Endothelial cell of umbilical vein (primary cell): ENCODE measurements at regions of chr19 and their contacts with region 1.

Region 1: GRCh38 chr19:5904352-5905113 is at the start of gene VMAC:
- DNase-seq: peak; percentile 100
- H3K4me3 ChIP-seq: peak within 1 kb of the TSS; percentile 45 to 89 (median 86)
- H3K27ac ChIP-seq: peak within 1 kb of the TSS; percentile 90
- H3K4me1 ChIP-seq: peaks cover 8% of the 10 kb centered on the region
- H3K27me3 ChIP-seq: no peaks in the 10 kb centered on the region
- CTCF ChIP-seq: no peak
- POLR2A ChIP-seq: peak; percentile 56
- total RNA-seq, gene VMAC: 4.4 and 4.7 TPM in 2 replicates

Region 2: GRCh38 chr19:5719961-5720790 is 184.4 kb before region 1 on chr19 and contains the starts of genes CATSPERD and LONP1:
- CTCF ChIA-PET with region 1: interaction called, 3 read pairs
- POLR2A ChIA-PET with region 1: no interaction called
- dilution Hi-C with region 1: no loop called
- intact Hi-C with region 1: loop called (anchors 1 kb)
- DNase-seq: peak; percentile 99
- H3K4me3 ChIP-seq: peak within 1 kb of the TSS; percentile 52 to 79 (median 75)
- H3K27ac ChIP-seq: peak within 1 kb of the TSS; percentile 85
- H3K4me1 ChIP-seq: peaks cover 15% of the 10 kb centered on the region
- H3K27me3 ChIP-seq: no peaks in the 10 kb centered on the region
- CTCF ChIP-seq: peak; percentile 92 to 98
- POLR2A ChIP-seq: peak; percentile 75
- total RNA-seq, gene CATSPERD: not detected in 2 replicates
- total RNA-seq, gene LONP1: 95.1 and 95.7 TPM in 2 replicates

Region 3: GRCh38 chr19:5790573-5791520 is 113.7 kb before region 1 on chr19 and contains the start of gene DUS3L:
- CTCF ChIA-PET with region 1: no interaction called
- POLR2A ChIA-PET with region 1: no interaction called
- dilution Hi-C with region 1: no loop called
- intact Hi-C with region 1: loop called (anchors 1 kb)
- DNase-seq: peak; percentile 99
- H3K4me3 ChIP-seq: peak within 1 kb of the TSS; percentile 17 to 75 (median 55)
- H3K27ac ChIP-seq: peak within 1 kb of the TSS; percentile 82
- H3K4me1 ChIP-seq: peaks cover 5% of the 10 kb centered on the region
- H3K27me3 ChIP-seq: no peaks in the 10 kb centered on the region
- CTCF ChIP-seq: no peak
- POLR2A ChIP-seq: peak; percentile 68
- total RNA-seq, gene DUS3L: 38.9 and 40.8 TPM in 2 replicates

Region 4: DNA sequence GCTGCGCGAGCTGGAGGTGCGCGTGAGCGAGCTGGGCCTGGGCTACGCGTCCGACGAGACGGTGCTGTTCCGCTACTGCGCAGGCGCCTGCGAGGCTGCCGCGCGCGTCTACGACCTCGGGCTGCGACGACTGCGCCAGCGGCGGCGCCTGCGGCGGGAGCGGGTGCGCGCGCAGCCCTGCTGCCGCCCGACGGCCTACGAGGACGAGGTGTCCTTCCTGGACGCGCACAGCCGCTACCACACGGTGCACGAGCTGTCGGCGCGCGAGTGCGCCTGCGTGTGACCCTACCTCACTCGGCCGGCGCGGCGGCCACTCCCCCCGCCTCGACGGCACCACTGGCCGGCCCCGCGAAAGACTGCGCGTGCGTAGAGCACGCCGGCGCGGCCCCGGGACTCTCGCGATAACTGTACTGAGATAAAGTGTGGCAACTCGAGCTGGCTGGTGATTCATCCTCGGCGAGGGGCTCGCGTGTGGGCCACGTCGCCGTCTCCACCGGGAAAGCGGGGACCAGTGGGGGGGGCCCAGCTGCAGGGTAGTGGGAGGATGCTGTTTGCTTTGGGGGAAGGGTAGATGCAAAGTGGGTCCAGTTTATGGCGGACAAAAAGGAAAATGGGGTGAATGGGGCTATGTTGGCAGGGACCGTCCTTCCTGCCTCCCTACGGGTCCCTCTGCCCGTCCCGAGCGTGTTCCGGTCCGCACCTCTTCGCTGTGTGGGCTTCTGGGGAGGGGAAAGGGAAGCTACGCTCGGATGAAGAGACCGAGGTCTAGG is 76.5 kb before region 1 on chr19:
- CTCF ChIA-PET with region 1: no interaction called
- POLR2A ChIA-PET with region 1: interaction called, 14 read pairs
- dilution Hi-C with region 1: no loop called
- intact Hi-C with region 1: loop called (anchors 2 kb)
- DNase-seq: peak; percentile 97
- H3K4me3 ChIP-seq: peak overlapping the region in 2 of 3 experiments; percentile 38 to 60
- H3K27ac ChIP-seq: peak overlapping the region; percentile 36
- H3K4me1 ChIP-seq: peaks cover 7% of the 10 kb centered on the region
- H3K27me3 ChIP-seq: peaks cover 0 to 3% of the 10 kb centered on the region in 2 experiments
- CTCF ChIP-seq: no peak
- POLR2A ChIP-seq: peak; percentile 95

Region 5: DNA sequence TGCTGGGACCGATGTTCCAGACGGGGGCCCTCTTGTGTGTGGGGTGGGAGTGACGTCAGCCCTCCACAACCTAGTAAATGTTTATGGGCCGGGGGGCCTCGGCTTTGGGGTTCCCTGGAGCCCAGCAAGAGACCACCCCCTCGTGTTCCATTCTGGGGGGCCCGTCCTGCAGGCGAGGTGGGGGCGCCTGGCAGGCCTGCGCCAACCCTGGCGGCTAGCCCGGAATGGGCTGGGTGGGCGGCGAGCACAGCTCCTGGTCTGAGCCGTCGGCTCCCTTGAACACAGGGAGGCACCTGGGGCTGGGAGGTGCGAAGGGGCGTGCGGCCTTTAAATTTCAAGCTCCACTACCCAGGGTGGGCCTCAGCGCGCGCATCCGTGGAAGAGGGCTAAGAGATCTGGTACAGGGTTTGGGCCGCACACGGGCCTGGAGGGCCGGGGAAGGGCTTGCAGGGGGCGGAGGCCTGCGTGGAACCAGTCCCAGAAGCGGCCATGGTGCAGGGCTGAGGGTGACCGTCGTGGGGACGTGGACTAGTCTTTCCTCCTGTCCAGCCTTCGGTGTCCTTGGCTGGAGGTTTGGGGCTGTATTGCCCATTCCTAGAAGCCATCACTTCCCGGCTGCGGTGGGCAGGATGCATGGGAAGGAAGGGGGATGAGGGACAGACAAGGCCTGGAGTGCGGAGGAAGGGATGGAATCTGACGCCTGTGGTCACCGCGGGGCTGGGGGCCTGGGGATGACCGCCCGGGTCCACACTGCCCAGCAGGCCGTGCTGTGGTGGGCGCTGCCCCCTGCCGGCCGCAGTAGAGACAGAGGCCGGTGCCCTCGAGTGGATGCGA is 12.4 kb before region 1 on chr19:
- CTCF ChIA-PET with region 1: no interaction called
- POLR2A ChIA-PET with region 1: no interaction called
- dilution Hi-C with region 1: no loop called
- intact Hi-C with region 1: no loop called
- DNase-seq: peak; percentile 33
- H3K4me3 ChIP-seq: no peak overlapping the region
- H3K27ac ChIP-seq: no peak overlapping the region
- H3K4me1 ChIP-seq: peaks cover 19% of the 10 kb centered on the region
- H3K27me3 ChIP-seq: no peaks in the 10 kb centered on the region
- CTCF ChIP-seq: peak; percentile 80 to 92
- POLR2A ChIP-seq: peak; percentile 35

Region 6: GRCh38 chr19:5914921-5915781 is 10.6 kb after region 1 on chr19:
- CTCF ChIA-PET with region 1: no interaction called
- POLR2A ChIA-PET with region 1: no interaction called
- dilution Hi-C with region 1: no loop called
- intact Hi-C with region 1: no loop called
- DNase-seq: no peak
- H3K4me3 ChIP-seq: no peak overlapping the region
- H3K27ac ChIP-seq: no peak overlapping the region
- H3K4me1 ChIP-seq: no peaks in the 10 kb centered on the region
- H3K27me3 ChIP-seq: no peaks in the 10 kb centered on the region
- CTCF ChIP-seq: no peak
- POLR2A ChIP-seq: no peak

Region 7: DNA sequence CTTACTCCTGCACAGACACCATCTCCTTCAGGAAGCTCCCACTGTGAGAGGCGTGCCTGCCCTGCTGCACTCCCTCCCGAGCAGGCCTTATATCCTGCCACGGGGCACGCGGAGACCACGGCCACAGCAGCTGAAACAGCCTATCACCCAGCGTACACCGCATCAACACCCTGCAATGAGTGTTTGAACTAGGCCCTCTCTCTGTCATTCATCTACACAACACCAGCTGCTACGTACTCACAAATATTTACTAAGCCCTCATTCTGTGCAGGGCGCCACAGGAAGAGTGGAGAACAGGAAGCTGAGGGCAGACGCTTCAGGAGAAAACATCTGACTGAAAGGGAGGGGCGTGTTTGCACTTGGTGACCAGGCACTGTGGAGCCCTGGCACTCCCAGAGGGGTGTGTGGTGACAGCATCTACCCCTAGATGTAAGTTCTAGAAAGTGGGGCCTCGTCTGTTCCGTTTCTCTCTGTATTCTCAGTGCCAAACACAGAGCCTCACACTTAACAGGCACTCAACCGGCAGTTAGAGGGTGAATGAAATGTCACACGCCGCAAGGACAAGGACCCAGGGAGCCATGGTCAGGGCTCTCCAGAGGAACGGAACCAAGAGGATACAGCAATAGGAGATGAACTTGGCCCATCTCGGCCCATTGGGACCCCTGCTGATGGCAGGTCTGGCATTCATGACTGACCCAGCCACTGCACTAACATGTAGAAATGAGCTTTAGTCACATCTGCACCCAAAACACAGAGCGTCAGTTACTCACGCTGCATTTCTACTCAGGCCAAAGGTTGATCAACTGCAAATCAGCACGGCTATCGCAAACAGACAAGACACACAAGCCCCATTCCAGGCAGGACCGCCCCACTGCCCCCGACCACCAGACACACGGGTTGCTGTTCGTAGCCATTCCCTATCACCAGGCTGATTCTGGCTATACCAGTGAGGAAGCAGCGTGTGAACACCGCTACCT is 57.7 kb after region 1 on chr19:
- CTCF ChIA-PET with region 1: no interaction called
- POLR2A ChIA-PET with region 1: interaction called, 3 read pairs
- dilution Hi-C with region 1: no loop called
- intact Hi-C with region 1: loop called (anchors 5 kb)
- DNase-seq: peak; percentile 93
- H3K4me3 ChIP-seq: no peak overlapping the region
- H3K27ac ChIP-seq: peak overlapping the region; percentile 42
- H3K4me1 ChIP-seq: peaks cover 15% of the 10 kb centered on the region
- H3K27me3 ChIP-seq: no peaks in the 10 kb centered on the region
- CTCF ChIP-seq: no peak
- POLR2A ChIP-seq: no peak

Region 8: DNA sequence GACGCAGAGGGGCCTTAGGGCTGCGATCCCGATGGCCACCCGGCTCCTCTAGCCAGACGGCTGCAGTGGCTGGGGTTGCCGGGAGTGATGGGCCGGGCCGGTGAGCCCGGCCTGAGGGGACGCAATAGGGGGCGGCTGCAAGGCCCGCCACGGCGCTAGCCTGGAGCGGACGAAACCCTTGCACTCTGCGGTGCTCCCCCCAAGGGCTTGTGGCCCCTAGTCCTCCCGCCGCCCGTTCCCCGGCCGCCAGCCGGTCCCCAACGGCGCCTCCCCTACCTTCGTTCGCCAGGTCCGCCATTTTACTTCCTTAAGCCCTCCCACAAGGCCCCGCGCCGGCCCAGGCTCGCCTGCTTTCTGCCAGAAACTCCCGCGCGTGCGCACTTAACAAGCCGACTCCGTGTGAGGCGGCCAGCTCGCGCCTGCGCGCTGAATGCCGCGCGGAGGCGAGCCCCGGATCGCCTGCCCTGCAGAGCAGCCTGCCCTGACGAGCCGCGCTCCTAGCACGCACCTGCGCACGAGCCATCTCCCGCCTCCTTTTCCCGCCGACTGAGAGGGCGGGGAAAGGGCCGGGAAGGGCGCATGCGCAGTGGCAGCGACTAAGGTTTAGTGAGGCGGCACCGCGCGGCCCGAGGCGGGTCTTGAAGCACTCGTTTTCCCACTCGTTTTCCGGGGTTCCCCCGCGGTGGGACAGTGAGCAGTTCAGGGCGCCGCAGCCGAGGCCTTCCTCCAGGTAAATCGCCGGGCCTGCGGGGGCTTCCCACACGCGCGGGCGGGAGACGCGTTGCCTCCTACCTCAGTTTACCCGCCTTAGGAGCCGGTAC is 73.5 kb after region 1 on chr19 and contains the start of gene RANBP3:
- CTCF ChIA-PET with region 1: no interaction called
- POLR2A ChIA-PET with region 1: no interaction called
- dilution Hi-C with region 1: no loop called
- intact Hi-C with region 1: loop called (anchors 1 kb)
- DNase-seq: peak; percentile 99
- H3K4me3 ChIP-seq: peak within 1 kb of the TSS; percentile 47 to 93 (median 91)
- H3K27ac ChIP-seq: peak within 1 kb of the TSS; percentile 71
- H3K4me1 ChIP-seq: peaks cover 17% of the 10 kb centered on the region
- H3K27me3 ChIP-seq: no peaks in the 10 kb centered on the region
- CTCF ChIP-seq: no peak
- POLR2A ChIP-seq: peak; percentile 66
- total RNA-seq, gene RANBP3: 72.3 and 87.8 TPM in 2 replicates

Region 9: DNA sequence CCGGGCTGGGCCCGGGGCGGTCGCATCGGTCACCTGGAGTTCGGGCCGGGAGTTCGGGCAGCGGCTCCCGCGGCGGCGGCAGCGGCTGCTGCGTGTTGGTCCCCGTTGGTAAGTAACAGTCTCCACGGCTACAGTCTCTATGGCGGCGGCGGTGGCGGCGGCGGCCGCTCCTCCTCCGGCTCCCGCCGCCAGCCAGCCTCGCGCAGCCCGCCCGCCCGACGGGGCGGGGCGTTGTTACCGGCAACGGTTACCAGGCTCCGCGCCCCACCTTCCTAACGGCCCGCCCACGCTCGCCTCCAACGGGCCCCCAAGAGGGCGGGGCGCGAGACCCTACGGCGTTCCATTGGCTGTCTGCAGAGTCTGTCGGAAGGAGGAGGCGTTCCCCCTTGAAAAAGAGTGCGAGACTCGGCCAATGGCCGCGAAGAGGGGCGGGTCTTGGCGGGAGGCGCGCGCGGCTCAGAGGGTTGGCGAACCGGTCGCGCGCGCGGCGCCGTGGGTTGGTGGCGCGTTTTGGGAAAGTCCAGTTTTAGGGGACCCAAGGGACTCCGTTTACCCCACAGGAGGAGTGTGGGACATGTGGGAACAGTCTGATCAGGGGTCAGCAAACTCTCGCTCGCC is 205.9 kb after region 1 on chr19 and contains the start of gene RFX2:
- CTCF ChIA-PET with region 1: no interaction called
- POLR2A ChIA-PET with region 1: no interaction called
- dilution Hi-C with region 1: no loop called
- intact Hi-C with region 1: loop called (anchors 10 kb)
- DNase-seq: peak; percentile 99
- H3K4me3 ChIP-seq: peak within 1 kb of the TSS; percentile 78 to 96 (median 80)
- H3K27ac ChIP-seq: peak within 1 kb of the TSS; percentile 86
- H3K4me1 ChIP-seq: peaks cover 12% of the 10 kb centered on the region
- H3K27me3 ChIP-seq: no peaks in the 10 kb centered on the region
- CTCF ChIP-seq: no peak
- POLR2A ChIP-seq: peak; percentile 52
- total RNA-seq, gene RFX2: 16.1 and 16.2 TPM in 2 replicates